ENCODE measurements at regions of chr9 and their contacts with region 1.

Region 1: GRCh38 chr9:128818099-128818838 is at the start of gene ENDOG:
- DNase-seq: peak; percentile 99
- ATAC-seq: peak; percentile 86
- H3K4me3 Mint-ChIP-seq: peak within 1 kb of the TSS; percentile 71
- H3K27ac Mint-ChIP-seq: peak within 1 kb of the TSS; percentile 80; the same call in 1 of the 2 replicates
- H3K4me1 Mint-ChIP-seq: peaks cover 3% of the 10 kb centered on the region
- H3K27me3 Mint-ChIP-seq: no peaks in the 10 kb centered on the region
- CTCF ChIP-seq: peak; percentile 53; the same call in 1 of the 2 replicates
- total RNA-seq, gene ENDOG: 25.8 to 28.7 TPM (median 25.8 TPM) in 3 replicates

Region 2: GRCh38 chr9:128764361-128764760 is 53.9 kb before region 1 on chr9:
- CTCF ChIA-PET with region 1: interaction called, 20 read pairs
- POLR2A ChIA-PET with region 1: no interaction called
- DNase-seq: peak; percentile 50
- ATAC-seq: peak; percentile 87
- H3K4me3 Mint-ChIP-seq: no peak overlapping the region
- H3K27ac Mint-ChIP-seq: peak overlapping the region; percentile 90
- H3K4me1 Mint-ChIP-seq: peaks cover 10% of the 10 kb centered on the region
- H3K27me3 Mint-ChIP-seq: no peaks in the 10 kb centered on the region
- CTCF ChIP-seq: no peak

Measured in WTC11 (cell line).